Activated CD4-positive, alpha-beta T cell treated with anti-CD3 and anti-CD28 coated beads, Interleukin-2, amount 10 ng/mL, durations not matched to agents 24 days and 14 days (primary cell): ENCODE measurements at regions of chr9 and their contacts with region 1.

Region 1: DNA sequence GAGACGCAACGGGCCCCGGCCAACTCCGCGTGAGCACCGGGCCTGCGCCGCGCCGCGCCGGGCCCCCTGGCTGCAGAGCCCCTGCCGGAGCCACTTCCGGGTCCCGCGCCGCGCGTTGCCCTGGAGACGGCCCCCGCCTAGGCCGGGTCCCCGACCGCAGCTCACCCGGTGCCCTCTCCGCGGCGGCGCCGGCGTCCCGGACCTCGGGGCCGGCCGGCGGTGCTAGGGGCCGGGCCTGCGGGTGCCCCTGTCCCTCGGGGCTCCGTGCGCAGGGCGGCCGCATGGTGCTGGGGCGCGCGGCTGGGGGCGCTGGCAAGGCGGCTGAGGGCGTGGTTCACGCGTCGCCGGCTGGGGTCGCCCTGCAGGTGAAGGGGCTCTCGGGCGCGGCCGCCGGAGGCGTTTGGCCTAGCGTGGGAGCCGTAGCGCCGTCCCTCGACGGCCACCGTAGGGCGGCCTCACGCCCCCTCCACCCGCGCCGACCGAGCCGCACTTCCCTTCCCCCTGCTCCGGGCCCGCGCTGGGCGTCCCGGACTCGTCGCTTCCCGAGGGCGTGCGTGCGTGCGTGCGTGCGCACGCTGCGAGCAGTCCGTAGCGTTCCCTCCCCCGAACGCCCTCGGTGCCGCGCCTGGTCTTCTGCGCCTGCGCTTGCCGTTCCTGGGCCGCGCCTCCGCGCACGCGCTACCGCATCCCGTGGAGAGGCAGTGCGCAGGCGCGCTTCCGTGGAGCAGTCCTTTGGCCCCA is at the start of gene TMEM250:
- DNase-seq: peak; percentile 99
- H3K4me3 Mint-ChIP-seq: peak within 1 kb of the TSS; percentile 84
- H3K27ac Mint-ChIP-seq: peak within 1 kb of the TSS; percentile 85
- H3K4me1 Mint-ChIP-seq: peaks cover 9% of the 10 kb centered on the region
- H3K27me3 Mint-ChIP-seq: no peaks in the 10 kb centered on the region
- total RNA-seq, gene TMEM250: 49.8 and 52.7 TPM in 2 replicates

Region 2: GRCh38 chr9:135701959-135702721 is 416.4 kb before region 1 on chr9 and contains the start of gene KCNT1:
- intact Hi-C with region 1: loop called (anchors 10 kb)
- DNase-seq: peak; percentile 88
- H3K4me3 Mint-ChIP-seq: no peak within 1 kb of the TSS
- H3K27ac Mint-ChIP-seq: no peak within 1 kb of the TSS
- H3K4me1 Mint-ChIP-seq: no peaks in the 10 kb centered on the region
- H3K27me3 Mint-ChIP-seq: no peaks in the 10 kb centered on the region
- total RNA-seq, gene KCNT1: not detected in 2 replicates

Region 3: DNA sequence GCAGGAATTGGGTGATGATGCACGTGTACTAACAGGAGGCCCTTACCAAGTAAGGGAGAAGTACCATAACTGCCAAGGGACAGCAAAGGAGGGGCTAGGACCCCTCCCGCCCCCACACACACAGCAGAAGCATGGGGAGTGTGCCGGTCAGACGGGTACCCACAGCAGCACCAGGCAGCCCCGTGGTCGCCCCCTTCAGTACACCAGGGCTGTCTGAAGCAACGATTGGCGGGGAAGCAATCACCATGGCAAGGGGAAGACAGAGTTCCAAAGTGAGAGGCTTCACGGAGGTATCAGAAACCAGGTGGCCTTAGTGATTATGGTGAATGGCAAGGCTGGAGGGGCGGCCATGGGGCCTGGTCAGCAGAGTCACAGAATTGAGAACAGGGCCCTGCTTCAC is 283.4 kb before region 1 on chr9:
- intact Hi-C with region 1: no loop called
- DNase-seq: no peak
- H3K4me3 Mint-ChIP-seq: no peak overlapping the region
- H3K27ac Mint-ChIP-seq: no peak overlapping the region
- H3K4me1 Mint-ChIP-seq: peaks cover 3% of the 10 kb centered on the region
- H3K27me3 Mint-ChIP-seq: no peaks in the 10 kb centered on the region

Region 4: DNA sequence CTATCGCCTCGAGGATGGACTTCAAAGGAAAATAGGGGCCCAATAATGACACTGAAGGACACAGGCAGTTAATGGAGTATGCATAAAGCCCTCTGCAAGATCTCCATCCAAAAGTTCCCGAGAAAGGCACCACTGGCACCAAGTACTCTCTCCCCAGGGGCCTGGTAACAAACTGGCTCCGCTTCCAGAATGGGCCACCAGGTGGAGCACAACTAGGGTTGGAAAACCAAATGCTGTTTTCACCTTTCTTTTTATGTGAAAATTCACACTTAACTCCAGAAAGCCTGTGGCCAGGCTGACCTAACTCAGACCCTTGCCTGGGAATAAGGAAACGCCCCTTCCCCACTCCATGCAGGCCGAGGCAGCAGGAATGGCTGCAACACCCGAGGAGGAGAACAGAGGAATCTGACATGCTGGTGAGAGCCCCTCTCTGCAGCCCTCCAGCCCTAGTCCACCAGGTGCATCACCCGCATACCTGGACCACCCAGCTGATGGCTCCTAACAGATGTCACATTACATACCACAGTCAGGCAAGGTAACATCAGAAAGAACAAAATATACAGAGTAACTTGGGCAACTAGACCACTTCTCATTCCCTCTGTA is 253.9 kb before region 1 on chr9:
- intact Hi-C with region 1: loop called (anchors 10 kb)
- DNase-seq: peak; percentile 91
- H3K4me3 Mint-ChIP-seq: no peak overlapping the region
- H3K27ac Mint-ChIP-seq: no peak overlapping the region
- H3K4me1 Mint-ChIP-seq: peaks cover 6% of the 10 kb centered on the region
- H3K27me3 Mint-ChIP-seq: no peaks in the 10 kb centered on the region

Region 5: DNA sequence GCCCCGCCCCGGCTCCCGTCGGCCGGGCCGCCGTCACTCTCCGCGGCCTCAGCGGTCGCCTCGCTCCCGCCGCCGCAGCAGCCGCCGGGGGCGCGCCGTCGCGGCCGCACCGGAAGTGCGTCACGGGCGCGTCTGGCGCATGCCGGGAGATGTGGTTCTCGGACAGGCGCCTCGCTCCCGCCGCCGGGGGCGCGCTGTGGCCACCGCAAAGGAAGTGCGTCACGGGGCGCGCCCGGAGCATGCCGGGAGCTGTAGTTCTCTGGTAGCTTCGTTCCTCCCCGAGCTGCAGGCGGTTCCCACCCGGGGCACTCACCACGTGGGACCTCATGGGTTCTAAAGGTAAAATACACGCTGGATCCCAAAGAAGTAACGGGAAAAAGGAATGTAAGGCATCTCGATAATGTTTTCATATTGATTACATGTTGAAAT is 157.2 kb before region 1 on chr9 and contains the start of gene UBAC1:
- intact Hi-C with region 1: loop called (anchors 2 kb)
- DNase-seq: peak; percentile 99
- H3K4me3 Mint-ChIP-seq: peak within 1 kb of the TSS; percentile 93
- H3K27ac Mint-ChIP-seq: peak within 1 kb of the TSS; percentile 85
- H3K4me1 Mint-ChIP-seq: peaks cover 32% of the 10 kb centered on the region
- H3K27me3 Mint-ChIP-seq: peaks cover 5% of the 10 kb centered on the region
- total RNA-seq, gene UBAC1: 43.2 and 47.7 TPM in 2 replicates

Region 6: DNA sequence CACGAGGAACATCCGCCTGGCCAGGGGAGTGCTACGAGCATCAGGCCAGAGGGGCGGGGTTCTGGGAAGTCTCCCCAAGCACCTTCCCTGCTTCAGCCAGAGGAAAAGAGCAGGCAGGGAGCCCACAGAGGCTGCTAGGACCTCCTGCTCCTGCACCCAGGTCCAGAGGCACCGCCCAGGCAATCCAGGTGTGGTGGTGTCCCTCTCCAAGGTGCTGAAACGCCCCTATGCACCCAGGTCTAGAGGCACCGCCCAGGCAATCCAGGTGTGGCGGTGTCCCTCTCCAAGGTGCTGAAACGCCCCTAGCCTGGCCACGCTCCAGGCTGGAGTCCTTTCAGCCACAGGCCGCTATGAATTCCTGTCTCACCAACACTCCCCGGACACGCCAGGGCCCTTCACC is 146.6 kb before region 1 on chr9:
- intact Hi-C with region 1: loop called (anchors 1 kb)
- DNase-seq: peak; percentile 84
- H3K4me3 Mint-ChIP-seq: no peak overlapping the region
- H3K27ac Mint-ChIP-seq: no peak overlapping the region
- H3K4me1 Mint-ChIP-seq: peaks cover 6% of the 10 kb centered on the region
- H3K27me3 Mint-ChIP-seq: peaks cover 5% of the 10 kb centered on the region

Region 7: GRCh38 chr9:136093995-136094881 is 24.3 kb before region 1 on chr9:
- intact Hi-C with region 1: loop called (anchors 1 kb)
- DNase-seq: peak; percentile 77
- H3K4me3 Mint-ChIP-seq: peak overlapping the region; percentile 68
- H3K27ac Mint-ChIP-seq: no peak overlapping the region
- H3K4me1 Mint-ChIP-seq: peaks cover 4% of the 10 kb centered on the region
- H3K27me3 Mint-ChIP-seq: peaks cover 15% of the 10 kb centered on the region